Dorsolateral prefrontal cortex (tissue), 120 donors: ENCODE measurements at regions of chr2 and their contacts with region 1.

Region 1: GRCh38 chr2:215454519-215455246 is 18.8 kb upstream of the FN1 start:
- DNase-seq: no peak
- H3K4me3 ChIP-seq: no peak overlapping the region
- H3K27ac ChIP-seq: no peak overlapping the region
- H3K27me3 ChIP-seq: peaks cover 0 to 8% (median 0%) of the 10 kb centered on the region in 45 donors
- CTCF ChIP-seq: peak; percentile 33 to 91 (median 80)

Region 2: GRCh38 chr2:215476424-215476823 is 21.7 kb after region 1 on chr2:
- intact Hi-C with region 1: no loop called
- DNase-seq: no peak
- H3K4me3 ChIP-seq: no peak overlapping the region
- H3K27ac ChIP-seq: no peak overlapping the region
- H3K27me3 ChIP-seq: peaks cover 0 to 4% (median 0%) of the 10 kb centered on the region in 45 donors
- CTCF ChIP-seq: no peak

Region 3: GRCh38 chr2:215920244-215921100 is 465.8 kb after region 1 on chr2:
- intact Hi-C with region 1: loop called (anchors 2 to 10 kb)
- DNase-seq: peak; percentile 44 to 84 (median 68)
- H3K4me3 ChIP-seq: no peak overlapping the region
- H3K27ac ChIP-seq: no peak overlapping the region
- H3K27me3 ChIP-seq: no peaks in the 10 kb centered on the region
- CTCF ChIP-seq: peak; percentile 34 to 98 (median 83)